ENCODE measurements at regions of chr12 and their contacts with region 1.

Region 1: GRCh38 chr12:77925536-77926108 is 94.9 kb downstream of the NAV3 start:
- DNase-seq: peak; percentile 62 to 78 (median 73)
- ATAC-seq: peak; percentile 85 to 98 (median 92)
- H3K4me3 ChIP-seq: peak overlapping the region in 5 of 12 donors; percentile 2 to 27 (median 13)
- H3K27ac ChIP-seq: no peak overlapping the region
- H3K4me1 ChIP-seq: peaks cover 0 to 8% (median 0%) of the 10 kb centered on the region in 12 donors
- H3K27me3 ChIP-seq: no peaks in the 10 kb centered on the region
- CTCF ChIP-seq: peak; percentile 80 to 98 (median 94)
- POLR2A ChIP-seq: no peak

Region 2: DNA sequence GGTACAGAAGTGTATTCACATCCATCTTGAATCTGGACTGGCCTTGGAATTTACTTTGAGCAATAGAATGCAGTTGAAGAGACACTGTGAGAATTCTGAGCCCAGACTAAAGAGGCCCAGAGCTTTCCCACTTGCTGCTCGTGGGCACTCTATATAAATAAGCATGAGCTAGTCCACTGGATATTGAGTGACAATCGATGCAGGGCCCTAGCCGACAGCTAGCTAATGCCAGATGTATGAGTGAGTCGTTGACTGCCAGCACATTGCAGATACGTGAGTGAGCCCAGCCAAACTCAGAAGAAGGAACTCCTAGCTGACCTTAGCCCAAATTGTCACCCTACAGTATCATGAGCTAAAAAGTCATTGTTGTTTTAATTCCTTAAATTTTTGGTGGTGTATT is 70.1 kb before region 1 on chr12:
- intact Hi-C with region 1: loop called in 1 of 10 experiments (anchors 10 kb)
- DNase-seq: peak; percentile 42 to 69 (median 52)
- ATAC-seq: peak; percentile 61 to 98 (median 94)
- H3K4me3 ChIP-seq: peak overlapping the region in 8 of 12 donors; percentile 3 to 41 (median 18)
- H3K27ac ChIP-seq: peak overlapping the region in 8 of 12 donors; percentile 1 to 60 (median 30)
- H3K4me1 ChIP-seq: peaks cover 0 to 25% (median 8%) of the 10 kb centered on the region in 12 donors
- H3K27me3 ChIP-seq: no peaks in the 10 kb centered on the region
- CTCF ChIP-seq: no peak
- POLR2A ChIP-seq: no peak

Measured in heart left ventricle (tissue), 16 donors.